Natural killer cell (primary cell): ENCODE measurements at regions of chr15 and their contacts with region 1.

Region 1: DNA sequence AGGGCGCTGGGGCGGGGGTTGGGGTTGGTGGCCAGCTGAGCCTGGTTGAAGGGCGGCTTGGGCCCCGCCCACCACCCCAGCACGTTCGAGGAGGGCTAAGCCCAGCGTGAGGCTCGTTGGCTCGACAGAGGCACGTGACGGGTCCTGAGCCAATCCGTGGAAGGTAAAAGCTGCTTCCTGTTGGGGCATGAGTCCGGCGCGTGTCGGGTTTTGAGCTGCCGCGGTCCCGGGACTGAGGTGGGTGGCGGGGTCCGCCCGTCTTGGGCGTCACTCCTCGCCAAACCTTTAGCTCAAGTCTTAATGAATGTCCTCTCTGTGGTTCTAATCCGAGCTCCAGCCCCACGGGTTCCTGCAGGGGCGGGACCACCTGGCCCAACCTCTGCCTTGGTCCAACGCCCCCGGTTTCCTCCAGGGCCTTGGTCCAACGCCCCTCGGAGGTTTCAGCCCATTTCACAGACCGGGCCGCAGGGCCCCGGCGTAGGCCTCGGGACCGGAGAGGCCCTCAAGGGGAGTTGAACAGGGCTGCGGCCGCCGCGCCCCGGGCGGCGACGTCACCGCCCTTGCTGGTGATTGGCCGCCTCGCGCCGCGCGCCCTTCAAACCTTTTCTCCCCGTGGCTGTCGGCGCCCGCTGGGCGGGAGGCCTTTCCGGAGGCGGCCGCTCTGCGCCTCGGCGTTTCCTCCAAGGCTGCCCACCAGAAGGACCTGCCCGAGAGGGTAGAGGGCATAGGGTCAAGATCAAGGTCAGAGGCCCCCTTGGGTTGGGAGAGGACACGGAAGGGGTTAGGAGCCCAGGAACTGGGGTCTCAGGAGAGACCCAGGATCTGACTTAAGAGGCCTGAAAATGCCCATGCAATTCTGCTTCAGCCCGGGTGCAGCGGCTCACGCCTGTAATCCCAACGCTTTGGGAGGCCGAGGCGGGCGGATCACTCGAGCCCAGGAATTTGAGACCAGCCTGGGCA is at the start of gene RCCD1:
- DNase-seq: peak; percentile 82 to 93
- ATAC-seq: peak; percentile 95 to 97 (median 97)
- H3K4me3 ChIP-seq: peak within 1 kb of the TSS; percentile 71
- H3K4me3 Mint-ChIP-seq: peak within 1 kb of the TSS; percentile 85
- H3K27ac ChIP-seq: peak within 1 kb of the TSS; percentile 88
- H3K27ac Mint-ChIP-seq: peak within 1 kb of the TSS; percentile 82 to 91
- H3K4me1 ChIP-seq: peaks cover 20% of the 10 kb centered on the region
- H3K4me1 Mint-ChIP-seq: peaks cover 0 to 10% of the 10 kb centered on the region in 2 donors
- H3K27me3 ChIP-seq: no peaks in the 10 kb centered on the region
- H3K27me3 Mint-ChIP-seq: no peaks in the 10 kb centered on the region
- CTCF ChIP-seq: no peak
- total RNA-seq, gene RCCD1: 4.2 to 5.4 (median 5.1) TPM

Region 2: GRCh38 chr15:90942354-90943120 is 12.5 kb before region 1 on chr15:
- intact Hi-C with region 1: no loop called
- DNase-seq: no peak
- ATAC-seq: no peak
- H3K4me3 ChIP-seq: no peak overlapping the region
- H3K4me3 Mint-ChIP-seq: no peak overlapping the region
- H3K27ac ChIP-seq: no peak overlapping the region
- H3K27ac Mint-ChIP-seq: no peak overlapping the region
- H3K4me1 ChIP-seq: no peaks in the 10 kb centered on the region
- H3K4me1 Mint-ChIP-seq: no peaks in the 10 kb centered on the region
- H3K27me3 ChIP-seq: no peaks in the 10 kb centered on the region
- H3K27me3 Mint-ChIP-seq: no peaks in the 10 kb centered on the region
- CTCF ChIP-seq: no peak

Region 3: GRCh38 chr15:91049378-91050127 is 94.6 kb after region 1 on chr15:
- intact Hi-C with region 1: loop called (anchors 2 kb)
- DNase-seq: peak in 1 of 2 donors; percentile 76
- ATAC-seq: peak; percentile 70 to 86 (median 82)
- H3K4me3 ChIP-seq: no peak overlapping the region
- H3K4me3 Mint-ChIP-seq: no peak overlapping the region
- H3K27ac ChIP-seq: no peak overlapping the region
- H3K27ac Mint-ChIP-seq: no peak overlapping the region
- H3K4me1 ChIP-seq: peaks cover 4% of the 10 kb centered on the region
- H3K4me1 Mint-ChIP-seq: peaks cover 6 to 12% of the 10 kb centered on the region in 2 donors
- H3K27me3 ChIP-seq: peaks cover under 1% of the 10 kb centered on the region
- H3K27me3 Mint-ChIP-seq: peaks cover 23 to 35% of the 10 kb centered on the region in 2 donors
- CTCF ChIP-seq: peak; percentile 34

Region 4: DNA sequence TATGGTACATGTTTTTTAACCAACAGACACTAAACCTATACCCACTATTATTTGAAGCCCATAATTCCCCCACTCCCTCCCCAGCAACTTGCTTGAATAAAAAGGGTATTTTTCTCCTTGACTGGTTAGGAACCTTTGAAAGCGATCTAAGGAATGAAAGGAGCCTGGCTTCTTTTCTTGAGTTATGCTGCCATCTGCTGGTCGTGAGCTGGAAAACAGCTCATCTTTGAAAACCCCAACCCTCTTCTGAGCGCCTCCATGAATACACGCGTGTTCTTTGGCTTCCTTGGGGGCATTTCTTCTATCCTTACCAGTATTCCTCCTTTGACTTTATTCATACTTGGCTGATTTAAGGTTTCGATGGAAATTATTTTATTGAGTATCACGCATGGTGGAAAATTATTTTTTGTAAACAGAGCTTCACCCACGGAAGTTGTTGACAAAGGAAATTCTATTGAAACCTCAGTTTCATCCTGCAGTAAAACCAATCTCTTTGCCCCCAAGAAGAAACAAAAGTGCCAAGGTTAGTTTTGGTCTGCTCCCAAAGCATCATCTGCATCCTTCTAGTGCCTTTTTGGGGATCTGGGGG is 316.7 kb after region 1 on chr15:
- intact Hi-C with region 1: loop called (anchors 1 kb)
- DNase-seq: peak; percentile 27 to 86
- ATAC-seq: peak; percentile 63 to 78 (median 75)
- H3K4me3 ChIP-seq: no peak overlapping the region
- H3K4me3 Mint-ChIP-seq: peak overlapping the region; percentile 22
- H3K27ac ChIP-seq: no peak overlapping the region
- H3K27ac Mint-ChIP-seq: no peak overlapping the region
- H3K4me1 ChIP-seq: no peaks in the 10 kb centered on the region
- H3K4me1 Mint-ChIP-seq: peaks cover 6% of the 10 kb centered on the region in 2 donors
- H3K27me3 ChIP-seq: peaks cover 2% of the 10 kb centered on the region
- H3K27me3 Mint-ChIP-seq: peaks cover 24 to 71% of the 10 kb centered on the region in 2 donors
- CTCF ChIP-seq: peak; percentile 71